ENCODE measurements at regions of chr11 and their contacts with region 1.

Region 1: DNA sequence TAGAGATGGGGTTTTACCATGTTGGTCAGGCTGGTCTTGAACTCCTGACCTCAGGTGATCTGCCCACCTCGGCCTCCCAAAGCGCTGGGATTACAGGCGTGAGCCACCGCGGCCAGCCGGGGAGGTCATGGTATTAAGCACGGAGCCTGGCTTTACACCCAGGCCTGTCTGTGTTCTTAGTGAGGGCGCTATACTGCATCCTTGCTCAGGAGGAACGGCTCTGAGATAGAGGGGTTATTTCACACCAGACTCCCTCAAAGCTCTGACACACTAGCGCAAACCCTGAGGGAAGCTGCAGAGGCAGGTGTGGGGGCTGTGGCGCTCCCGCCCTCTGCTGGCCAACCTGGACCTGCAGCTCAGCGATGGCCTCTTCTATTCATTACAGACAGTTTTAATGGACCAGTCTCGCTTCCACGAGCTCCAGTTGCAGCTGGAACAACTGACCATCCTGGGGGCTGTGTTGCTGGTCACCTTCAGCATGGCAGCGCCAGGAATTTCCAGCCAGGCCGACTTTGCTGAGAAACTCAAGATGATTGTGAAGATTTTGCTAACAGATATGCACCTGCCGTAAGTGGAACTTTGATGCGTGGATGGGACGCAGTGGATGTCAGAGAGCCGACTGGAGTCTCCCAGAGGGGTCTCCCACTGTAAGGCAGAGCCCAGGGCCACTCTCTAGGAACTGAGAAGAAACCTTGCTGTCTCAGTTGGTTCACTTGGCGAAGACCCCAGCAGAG is 26.2 kb downstream of the TCP11L1 start:
- DNase-seq: no peak
- H3K4me3 ChIP-seq: no peak overlapping the region
- H3K27me3 ChIP-seq: no peaks in the 10 kb centered on the region
- CTCF ChIP-seq: peak; percentile 94

Region 2: GRCh38 chr11:32809313-32809712 is 256.3 kb before region 1 on chr11:
- CTCF ChIA-PET with region 1: interaction called, 13 read pairs
- POLR2A ChIA-PET with region 1: no interaction called
- DNase-seq: peak; percentile 18
- H3K4me3 ChIP-seq: no peak overlapping the region
- H3K27me3 ChIP-seq: no peaks in the 10 kb centered on the region
- CTCF ChIP-seq: peak; percentile 89

Region 3: GRCh38 chr11:32960553-32961164 is 105.0 kb before region 1 on chr11:
- CTCF ChIA-PET with region 1: interaction called, 119 read pairs
- POLR2A ChIA-PET with region 1: no interaction called
- DNase-seq: peak; percentile 9
- H3K4me3 ChIP-seq: no peak overlapping the region
- H3K27me3 ChIP-seq: no peaks in the 10 kb centered on the region
- CTCF ChIP-seq: peak; percentile 43

Region 4: DNA sequence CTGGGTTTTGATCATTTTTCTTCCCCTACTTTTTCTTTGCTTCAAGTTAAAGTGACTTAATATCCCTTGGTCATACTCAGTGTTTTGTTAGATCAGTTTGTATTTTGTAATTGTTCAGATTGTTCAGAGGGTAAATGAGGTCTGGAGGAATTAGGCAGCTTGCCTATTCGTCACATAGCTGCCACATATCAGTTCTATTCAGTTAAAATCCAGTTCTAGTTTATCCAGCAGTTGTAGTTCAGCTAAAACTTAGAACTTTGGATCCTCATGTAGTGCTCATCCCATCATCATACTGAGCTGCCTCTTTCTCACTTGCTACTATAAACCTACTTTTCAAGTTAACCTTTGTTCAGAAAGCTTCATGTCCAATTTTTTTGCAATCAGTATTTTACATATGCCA is 97.1 kb before region 1 on chr11:
- CTCF ChIA-PET with region 1: interaction called, 119 read pairs
- POLR2A ChIA-PET with region 1: no interaction called
- DNase-seq: no peak
- H3K4me3 ChIP-seq: no peak overlapping the region
- H3K27me3 ChIP-seq: no peaks in the 10 kb centered on the region
- CTCF ChIP-seq: no peak